Right ventricle myocardium inferior (tissue), 1 donor: ENCODE measurements at regions of chr19 and their contacts with region 1.

Region 1: GRCh38 chr19:58362272-58362994 is at the start of gene ZNF497:
- DNase-seq: peak; percentile 99
- ATAC-seq: peak; percentile 97
- total RNA-seq, gene ZNF497: 0.19 TPM

Region 2: DNA sequence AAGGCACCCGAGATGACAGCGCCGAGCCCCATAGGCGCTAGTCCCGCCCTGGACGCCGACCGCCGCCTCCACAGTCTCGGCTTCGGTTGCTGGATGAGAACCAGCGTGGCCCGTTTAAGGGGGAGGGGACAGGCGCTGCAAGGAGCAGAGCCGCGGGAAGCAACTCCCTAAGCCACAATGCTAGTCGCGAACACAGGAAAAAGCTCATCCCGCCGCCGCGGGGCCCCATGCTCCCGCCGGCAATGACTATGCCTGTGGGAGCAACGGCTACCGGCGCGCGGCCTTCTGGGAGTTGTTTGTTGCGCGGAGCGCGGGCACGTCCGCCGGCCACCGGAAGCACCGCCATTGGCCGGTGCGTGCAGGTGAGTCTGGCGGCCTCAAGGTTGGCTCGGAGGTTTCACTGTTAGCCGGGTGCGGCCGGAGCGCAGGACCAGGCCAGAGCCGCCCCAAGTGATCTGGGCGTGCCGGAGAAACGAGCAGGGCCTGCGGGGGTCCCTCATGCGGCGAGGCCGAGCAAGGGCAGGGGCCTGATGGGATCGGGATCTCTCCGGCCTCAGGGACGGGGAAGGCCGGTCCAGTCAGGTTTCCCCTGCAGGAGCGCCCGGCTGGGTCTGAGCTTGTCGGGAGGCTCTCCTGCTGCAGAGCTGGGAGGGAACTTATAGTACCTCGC is 133.7 kb before region 1 on chr19 and contains the start of gene ZNF544:
- intact Hi-C with region 1: no loop called
- DNase-seq: peak; percentile 87
- ATAC-seq: peak; percentile 96
- total RNA-seq, gene ZNF544: 19.4 TPM

Region 3: GRCh38 chr19:58326914-58327726 is 35.3 kb before region 1 on chr19 and contains the start of gene ZSCAN22:
- intact Hi-C with region 1: loop called (anchors 1 kb)
- DNase-seq: peak; percentile 99
- ATAC-seq: peak; percentile 97
- total RNA-seq, gene ZSCAN22: 1.8 TPM

Region 4: GRCh38 chr19:58380722-58381466 is 18.5 kb after region 1 on chr19 and contains the start of gene ZNF837:
- intact Hi-C with region 1: loop called (anchors 2 kb)
- DNase-seq: peak; percentile 98
- ATAC-seq: peak; percentile 95
- total RNA-seq, gene ZNF837: 0.22 TPM

Region 5: GRCh38 chr19:58408152-58409009 is 45.9 kb after region 1 on chr19 and contains the start of gene ZNF584:
- intact Hi-C with region 1: loop called (anchors 1 kb)
- DNase-seq: peak; percentile 98
- ATAC-seq: peak; percentile 99
- total RNA-seq, gene ZNF584: 15.8 TPM